Activated B cell treated with CpG ODN at 0.5 μM for 24 hours (primary cell): ENCODE measurements at regions of chr4 and their contacts with region 1.

Region 1: GRCh38 chr4:2761035-2761923 is 5.1 kb upstream of the TNIP2 start:
- DNase-seq: no peak
- ATAC-seq: no peak
- H3K4me3 Mint-ChIP-seq: no peak overlapping the region
- H3K27ac Mint-ChIP-seq: no peak overlapping the region
- H3K4me1 Mint-ChIP-seq: peaks cover 23% of the 10 kb centered on the region
- H3K27me3 Mint-ChIP-seq: no peaks in the 10 kb centered on the region
- CTCF ChIP-seq: no peak

Region 2: DNA sequence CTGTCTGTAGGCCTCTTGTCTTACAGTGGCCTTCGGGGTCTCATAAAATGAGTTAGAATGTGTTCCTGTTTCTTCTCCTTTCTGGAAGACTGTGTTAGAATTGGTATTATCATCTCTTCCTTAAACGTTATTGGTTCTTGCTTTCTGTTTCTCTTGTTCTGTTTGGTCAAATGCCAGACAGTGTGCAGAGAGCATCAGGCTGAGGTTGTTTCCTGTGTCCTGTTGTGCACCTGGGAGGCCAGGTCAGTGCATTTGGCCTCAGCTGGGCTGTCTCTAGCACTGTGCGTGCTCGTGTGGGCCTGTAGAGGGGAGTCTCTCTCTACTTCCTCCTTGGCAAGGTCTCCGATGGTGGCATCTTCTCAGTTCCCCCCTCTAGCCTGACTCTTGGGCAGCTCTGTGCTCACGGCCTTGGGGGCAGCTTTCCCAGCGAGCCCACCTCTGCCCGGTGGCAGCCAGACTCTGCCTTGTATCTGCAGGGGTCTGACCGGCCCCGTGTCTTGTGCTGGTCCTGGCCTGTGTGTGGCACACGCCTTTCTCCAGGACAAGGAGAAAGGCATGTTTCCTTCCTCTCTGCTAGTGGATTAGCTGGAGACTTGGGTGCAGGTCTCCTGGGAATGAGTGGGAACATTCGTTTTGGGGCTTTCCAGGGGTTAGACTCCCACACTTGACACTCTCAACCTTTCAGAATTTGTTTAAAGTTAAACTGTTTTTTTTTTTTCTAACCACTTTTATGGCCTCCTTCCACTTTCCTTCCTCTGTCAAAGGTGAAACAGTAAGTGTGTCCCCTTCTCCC is 162.6 kb before region 1 on chr4:
- CTCF ChIA-PET with region 1: interaction called, 8 read pairs
- POLR2A ChIA-PET with region 1: interaction called, 4 read pairs
- intact Hi-C with region 1: loop called (anchors 5 kb)
- DNase-seq: peak; percentile 41
- ATAC-seq: peak; percentile 98
- H3K4me3 Mint-ChIP-seq: peak overlapping the region; percentile 67
- H3K27ac Mint-ChIP-seq: peak overlapping the region; percentile 85
- H3K4me1 Mint-ChIP-seq: peaks cover 68% of the 10 kb centered on the region
- H3K27me3 Mint-ChIP-seq: no peaks in the 10 kb centered on the region
- CTCF ChIP-seq: no peak

Region 3: GRCh38 chr4:2832349-2833239 is 71.3 kb after region 1 on chr4:
- CTCF ChIA-PET with region 1: interaction called, 4 read pairs
- POLR2A ChIA-PET with region 1: interaction called, 7 read pairs
- intact Hi-C with region 1: loop called (anchors 1 kb)
- DNase-seq: peak; percentile 65
- ATAC-seq: peak; percentile 85
- H3K4me3 Mint-ChIP-seq: peak overlapping the region; percentile 67
- H3K27ac Mint-ChIP-seq: peak overlapping the region; percentile 83
- H3K4me1 Mint-ChIP-seq: peaks cover 60% of the 10 kb centered on the region
- H3K27me3 Mint-ChIP-seq: no peaks in the 10 kb centered on the region
- CTCF ChIP-seq: no peak

Region 4: DNA sequence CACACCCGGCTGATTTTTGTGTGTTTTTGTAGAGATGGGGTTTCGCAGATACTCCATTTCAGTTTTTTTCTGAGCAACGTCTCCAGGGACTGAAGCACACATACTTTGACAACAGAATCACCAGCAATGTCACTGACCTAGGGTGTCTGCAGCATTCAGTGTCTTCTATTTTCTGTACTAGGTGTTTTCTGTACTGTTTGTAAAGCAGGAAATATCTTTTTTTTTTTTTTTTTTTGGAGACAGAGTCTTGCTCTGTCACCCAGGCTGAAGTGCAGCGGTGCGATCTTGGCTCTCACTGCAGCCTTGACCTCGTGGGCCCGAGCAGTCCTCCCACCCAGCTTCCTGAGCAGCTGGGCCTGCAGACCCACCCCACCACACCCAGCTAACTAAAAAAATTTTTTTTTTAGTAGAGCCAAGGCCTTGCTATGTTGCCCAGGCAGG is 91.2 kb after region 1 on chr4:
- CTCF ChIA-PET with region 1: interaction called, 3 read pairs
- POLR2A ChIA-PET with region 1: interaction called, 17 read pairs
- intact Hi-C with region 1: loop called (anchors 1 kb)
- DNase-seq: no peak
- ATAC-seq: peak; percentile 77
- H3K4me3 Mint-ChIP-seq: peak overlapping the region; percentile 73
- H3K27ac Mint-ChIP-seq: peak overlapping the region; percentile 82
- H3K4me1 Mint-ChIP-seq: peaks cover 91% of the 10 kb centered on the region
- H3K27me3 Mint-ChIP-seq: no peaks in the 10 kb centered on the region
- CTCF ChIP-seq: no peak

Region 5: GRCh38 chr4:2963175-2963965 is 202.1 kb after region 1 on chr4 and contains the starts of genes GRK4 and NOP14:
- CTCF ChIA-PET with region 1: interaction called, 3 read pairs
- POLR2A ChIA-PET with region 1: interaction called, 9 read pairs
- intact Hi-C with region 1: loop called (anchors 5 kb)
- DNase-seq: peak; percentile 89
- ATAC-seq: peak; percentile 91
- H3K4me3 Mint-ChIP-seq: peak within 1 kb of the TSS; percentile 91
- H3K27ac Mint-ChIP-seq: peak within 1 kb of the TSS; percentile 92
- H3K4me1 Mint-ChIP-seq: peaks cover 29% of the 10 kb centered on the region
- H3K27me3 Mint-ChIP-seq: no peaks in the 10 kb centered on the region
- CTCF ChIP-seq: no peak
- total RNA-seq, gene GRK4: 1.4 and 2.1 TPM in 2 replicates
- total RNA-seq, gene NOP14: 56.3 and 57.3 TPM in 2 replicates

Region 6: GRCh38 chr4:3384785-3385732 is 623.8 kb after region 1 on chr4:
- CTCF ChIA-PET with region 1: no interaction called
- POLR2A ChIA-PET with region 1: no interaction called
- intact Hi-C with region 1: no loop called
- DNase-seq: no peak
- ATAC-seq: no peak
- H3K4me3 Mint-ChIP-seq: no peak overlapping the region
- H3K27ac Mint-ChIP-seq: peak overlapping the region; percentile 69
- H3K4me1 Mint-ChIP-seq: peaks cover 46% of the 10 kb centered on the region
- H3K27me3 Mint-ChIP-seq: peaks cover 5% of the 10 kb centered on the region
- CTCF ChIP-seq: no peak